ENCODE measurements at regions of chr15 and their contacts with region 1.

Region 1: GRCh38 chr15:85485956-85486567 is 105.7 kb downstream of the AKAP13 start:
- H3K4me3 ChIP-seq: no peak overlapping the region
- H3K27ac ChIP-seq: no peak overlapping the region
- H3K4me1 ChIP-seq: peaks cover 6% of the 10 kb centered on the region
- CTCF ChIP-seq: peak; percentile 49; the same call in 1 of the 2 replicates

Region 2: GRCh38 chr15:85475317-85475701 is 10.8 kb before region 1 on chr15:
- CTCF ChIA-PET with region 1: interaction called, 24 read pairs
- POLR2A ChIA-PET with region 1: no interaction called
- H3K4me3 ChIP-seq: no peak overlapping the region
- H3K27ac ChIP-seq: no peak overlapping the region
- H3K4me1 ChIP-seq: peaks cover 32% of the 10 kb centered on the region
- CTCF ChIP-seq: no peak

Region 3: DNA sequence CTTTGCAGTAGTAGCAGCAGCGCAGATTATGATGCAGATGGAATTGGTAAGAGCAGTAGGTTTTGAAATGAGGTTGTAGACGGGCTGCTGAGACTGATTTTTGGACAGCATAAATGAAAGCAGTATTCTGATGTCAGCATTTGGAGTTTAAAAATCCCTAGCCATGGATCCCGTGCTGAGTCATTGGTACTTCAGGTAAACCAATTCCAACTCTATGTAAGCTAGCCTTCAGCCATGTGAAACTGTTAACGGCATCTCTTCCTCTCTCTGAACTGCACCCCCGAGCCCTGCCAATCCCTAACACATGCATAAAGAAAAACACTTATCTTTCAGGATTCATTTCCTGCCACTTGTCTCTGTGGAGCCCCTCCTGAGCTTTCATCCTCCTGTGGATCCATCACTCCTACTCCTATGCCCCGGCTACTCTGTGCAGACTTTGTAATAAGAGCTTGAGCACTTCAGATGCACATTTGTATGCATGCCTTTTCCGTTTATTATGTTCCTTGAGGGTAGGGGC is 13.4 kb after region 1 on chr15:
- CTCF ChIA-PET with region 1: interaction called, 44 read pairs
- POLR2A ChIA-PET with region 1: interaction called, 4 read pairs
- H3K4me3 ChIP-seq: no peak overlapping the region
- H3K27ac ChIP-seq: no peak overlapping the region
- H3K4me1 ChIP-seq: peaks cover 50% of the 10 kb centered on the region
- CTCF ChIP-seq: no peak

Measured in HEK293 (cell line).